H1 (cell line): ENCODE measurements at regions of chr1 and their contacts with region 1.

Region 1: GRCh38 chr1:153990468-153991150 is at the start of gene RPS27:
- DNase-seq: peak; percentile 86 to 93
- H3K4me3 ChIP-seq: peak within 1 kb of the TSS; percentile 78 to 95 (median 87)
- H3K27ac ChIP-seq: peak within 1 kb of the TSS; percentile 95
- H3K4me1 ChIP-seq: peaks cover 0 to 8% (median 3%) of the 10 kb centered on the region in 4 experiments; a peak in 4 of 7 replicates
- H3K27me3 ChIP-seq: no peaks in the 10 kb centered on the region
- CTCF ChIP-seq: no peak
- EP300 ChIP-seq: no peak
- POLR2A ChIP-seq: peak; percentile 100
- RAD21 ChIP-seq: no peak
- total RNA-seq, gene RPS27: 1,810 and 1,941 TPM in 2 replicates

Region 2: DNA sequence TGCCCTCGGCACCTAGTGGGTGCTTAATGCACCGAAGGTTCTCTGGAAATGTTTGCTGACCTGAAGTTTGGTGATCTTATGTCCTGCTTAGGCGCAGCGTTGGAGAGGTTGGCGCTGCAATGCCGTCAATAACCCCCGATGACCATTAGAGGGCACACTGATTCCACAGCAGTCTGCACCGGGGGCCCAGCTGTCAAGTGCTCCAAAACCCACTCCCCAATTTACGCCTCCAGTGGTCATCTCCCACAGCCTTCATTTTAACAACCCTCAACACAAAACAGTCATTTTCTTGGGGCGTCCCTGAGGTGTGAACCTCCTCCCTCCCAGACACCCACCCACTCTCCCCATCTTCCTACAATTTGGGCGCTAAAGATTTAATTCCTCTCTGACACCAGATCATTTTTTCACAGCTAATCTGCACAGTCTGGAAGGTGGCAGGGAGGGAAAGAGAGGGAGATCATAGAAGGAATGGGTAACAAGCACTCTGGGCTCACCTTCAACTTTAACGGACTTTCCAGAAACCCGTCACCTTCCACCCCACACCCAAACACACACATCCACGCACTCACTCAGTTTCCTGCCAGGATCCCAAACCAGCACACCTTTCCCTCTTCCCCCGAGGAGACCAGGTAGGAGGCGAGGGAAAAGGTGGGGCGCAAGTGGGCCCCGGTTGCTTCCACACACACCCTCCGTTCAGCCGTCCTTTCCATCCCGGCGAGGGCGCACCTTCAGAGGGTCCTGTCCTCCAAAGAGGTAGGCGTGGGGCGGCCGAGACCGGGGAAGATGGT is 312.7 kb before region 1 on chr1:
- CTCF ChIA-PET with region 1: no interaction called
- POLR2A ChIA-PET with region 1: interaction called, 17 read pairs
- DNase-seq: peak in 1 of 2 experiments; percentile 82
- H3K4me3 ChIP-seq: peak overlapping the region; percentile 38 to 76 (median 69)
- H3K27ac ChIP-seq: no peak overlapping the region
- H3K4me1 ChIP-seq: peaks cover 3 to 9% (median 6%) of the 10 kb centered on the region in 4 experiments; a peak in 6 of 7 replicates
- H3K27me3 ChIP-seq: peaks cover 0 to 21% (median 9%) of the 10 kb centered on the region in 4 experiments; a peak in 5 of 7 replicates
- CTCF ChIP-seq: peak; percentile 97 to 98 (median 98)
- EP300 ChIP-seq: no peak
- POLR2A ChIP-seq: no peak
- RAD21 ChIP-seq: peak; percentile 94 to 95

Region 3: DNA sequence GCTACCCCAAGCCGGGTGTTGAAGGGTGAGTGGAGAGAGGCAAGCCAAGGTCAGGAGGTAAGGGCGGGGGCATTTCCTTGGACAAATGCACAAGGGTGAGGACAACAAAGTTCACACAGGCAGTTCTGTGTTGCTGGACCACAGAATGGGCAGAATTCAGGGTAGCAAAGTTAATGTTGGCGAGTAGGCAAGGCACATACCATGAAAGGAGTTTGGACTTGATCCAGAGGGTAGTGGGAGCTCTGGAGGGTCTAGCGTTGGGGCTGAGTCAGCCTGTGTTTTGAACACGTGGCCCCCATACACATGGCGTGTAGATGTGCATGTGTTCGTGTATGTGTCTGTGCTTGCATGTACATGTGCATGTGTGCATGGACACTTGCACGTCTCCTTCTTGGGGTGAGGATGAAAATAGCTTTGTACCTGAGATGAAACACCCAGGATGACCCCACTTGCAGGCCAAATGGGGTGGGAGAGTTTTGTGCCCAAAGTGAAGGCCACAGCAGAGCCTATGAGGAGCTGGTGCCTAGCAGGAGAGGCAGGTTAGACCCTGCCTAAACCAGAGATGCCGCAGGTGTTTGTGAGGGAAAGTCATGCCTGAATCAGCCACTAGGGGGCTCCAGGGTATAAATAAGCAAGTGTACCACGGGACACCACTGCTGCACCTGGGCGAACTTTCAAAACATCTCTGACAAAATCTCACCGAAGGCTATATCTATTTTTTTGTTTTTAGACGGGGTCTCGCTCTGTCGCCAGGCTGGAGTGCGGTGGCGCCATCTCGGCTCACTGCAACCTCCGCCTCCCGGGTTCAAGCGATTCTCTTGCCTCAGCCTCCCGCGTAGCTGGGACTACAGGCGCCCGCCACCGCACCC is 193.6 kb before region 1 on chr1:
- CTCF ChIA-PET with region 1: interaction called, 19 read pairs
- POLR2A ChIA-PET with region 1: interaction called, 153 read pairs
- DNase-seq: peak; percentile 59 to 94
- H3K4me3 ChIP-seq: no peak overlapping the region
- H3K27ac ChIP-seq: no peak overlapping the region
- H3K4me1 ChIP-seq: peaks cover 6 to 32% (median 22%) of the 10 kb centered on the region in 4 experiments
- H3K27me3 ChIP-seq: no peaks in the 10 kb centered on the region
- CTCF ChIP-seq: peak in 2 of 3 experiments; percentile 81 to 85; a peak in 3 of 4 replicates
- EP300 ChIP-seq: no peak
- POLR2A ChIP-seq: no peak
- RAD21 ChIP-seq: peak; percentile 70 to 84

Region 4: DNA sequence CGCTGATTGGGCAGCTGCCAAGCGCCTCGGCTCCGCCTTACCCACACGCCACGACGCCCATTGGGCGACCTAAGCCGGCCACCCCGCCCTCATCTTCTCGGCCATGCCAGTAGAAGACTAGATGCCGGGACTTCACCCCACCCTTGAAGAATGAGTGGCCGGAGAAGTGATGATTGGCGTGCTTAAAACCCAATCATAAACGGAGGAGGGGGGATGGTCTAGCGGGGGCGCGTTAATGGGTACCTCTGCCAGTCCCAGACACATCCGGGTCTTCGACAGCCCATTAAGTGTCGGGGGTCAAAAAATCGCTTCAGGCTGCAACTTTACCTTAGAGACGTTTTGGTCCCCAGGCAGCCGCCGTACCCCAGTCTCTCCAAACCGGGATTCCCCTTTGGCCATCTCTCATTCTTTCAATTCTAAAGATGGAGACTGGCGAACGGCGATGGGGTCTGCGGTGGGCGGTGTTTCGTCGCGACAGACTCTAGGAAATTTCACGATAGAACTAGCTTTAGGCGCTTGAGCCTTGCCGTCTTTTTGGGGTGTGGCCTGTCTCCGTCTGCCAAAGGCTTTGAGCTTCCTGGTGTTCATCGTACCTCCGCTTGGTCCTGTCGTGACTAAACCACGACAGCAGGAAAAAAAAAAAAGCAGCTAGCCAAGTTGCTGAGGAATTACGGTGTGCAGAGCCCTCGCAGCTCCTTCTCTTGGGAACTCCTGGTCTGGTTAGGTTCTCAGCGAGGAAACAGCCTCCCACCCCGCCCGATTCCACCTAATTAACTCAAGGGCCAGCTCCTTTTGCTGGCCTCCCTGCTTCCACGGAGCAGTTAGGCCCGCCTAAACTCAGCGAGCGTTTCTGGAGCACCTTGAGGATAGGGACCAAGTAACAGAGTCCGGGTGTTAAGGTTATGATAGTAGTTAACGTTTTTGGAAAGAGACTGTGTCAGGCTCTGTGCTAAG is 67.4 kb before region 1 on chr1 and contains the start of gene GATAD2B:
- CTCF ChIA-PET with region 1: interaction called, 11 read pairs
- POLR2A ChIA-PET with region 1: interaction called, 37 read pairs
- DNase-seq: peak; percentile 96 to 100
- H3K4me3 ChIP-seq: peak within 1 kb of the TSS; percentile 89 to 100 (median 96)
- H3K27ac ChIP-seq: peak within 1 kb of the TSS; percentile 83; the same call in 1 of the 2 replicates
- H3K4me1 ChIP-seq: peaks cover 6 to 14% (median 11%) of the 10 kb centered on the region in 4 experiments
- H3K27me3 ChIP-seq: no peaks in the 10 kb centered on the region
- CTCF ChIP-seq: no peak
- EP300 ChIP-seq: no peak
- POLR2A ChIP-seq: peak in 1 of 2 experiments; percentile 16; a peak in 2 of 3 replicates
- RAD21 ChIP-seq: peak in 1 of 2 experiments; percentile 9; a peak in 1 of 4 replicates
- total RNA-seq, gene GATAD2B: 39.1 and 41.5 TPM in 2 replicates

Region 5: GRCh38 chr1:153967082-153968000 is 23.3 kb before region 1 on chr1 and contains the start of gene CREB3L4:
- CTCF ChIA-PET with region 1: interaction called, 19 read pairs
- POLR2A ChIA-PET with region 1: interaction called, 454 read pairs
- DNase-seq: peak in 1 of 2 experiments; percentile 90
- H3K4me3 ChIP-seq: peak within 1 kb of the TSS; percentile 51 to 77 (median 66)
- H3K27ac ChIP-seq: peak within 1 kb of the TSS; percentile 91
- H3K4me1 ChIP-seq: peaks cover 0 to 12% (median 6%) of the 10 kb centered on the region in 4 experiments; a peak in 5 of 7 replicates
- H3K27me3 ChIP-seq: no peaks in the 10 kb centered on the region
- CTCF ChIP-seq: peak in 2 of 3 experiments; percentile 37 to 51; a peak in 2 of 4 replicates
- EP300 ChIP-seq: no peak
- POLR2A ChIP-seq: peak; percentile 78 to 82
- RAD21 ChIP-seq: peak; percentile 6 to 11; a peak in 1 of 4 replicates
- total RNA-seq, gene CREB3L4: 34.4 and 37.2 TPM in 2 replicates

Region 6: DNA sequence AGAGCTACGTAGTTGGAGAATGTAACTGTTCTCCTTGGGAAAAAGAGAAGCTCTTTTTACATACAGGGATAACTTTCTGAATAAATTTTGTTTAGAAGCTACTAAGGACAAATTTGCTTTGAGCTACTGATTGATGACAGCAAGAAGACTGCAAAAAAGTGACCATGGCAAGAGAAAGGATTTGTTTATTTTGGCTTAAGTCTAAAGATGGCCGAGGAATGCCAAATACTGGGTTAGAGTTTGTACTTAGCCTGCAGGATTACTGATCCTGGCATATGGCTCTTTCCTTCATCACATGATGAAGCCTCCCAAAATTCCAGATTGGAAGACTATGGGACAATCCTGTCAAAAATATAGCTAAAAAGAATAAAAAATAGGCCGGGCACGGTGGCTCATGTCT is 28.7 kb after region 1 on chr1:
- CTCF ChIA-PET with region 1: no interaction called
- POLR2A ChIA-PET with region 1: interaction called, 40 read pairs
- DNase-seq: no peak
- H3K4me3 ChIP-seq: no peak overlapping the region
- H3K27ac ChIP-seq: no peak overlapping the region
- H3K4me1 ChIP-seq: no peaks in the 10 kb centered on the region
- H3K27me3 ChIP-seq: no peaks in the 10 kb centered on the region
- CTCF ChIP-seq: no peak
- EP300 ChIP-seq: no peak
- POLR2A ChIP-seq: no peak
- RAD21 ChIP-seq: no peak

Region 7: GRCh38 chr1:154183045-154183915 is 192.7 kb after region 1 on chr1:
- CTCF ChIA-PET with region 1: no interaction called
- POLR2A ChIA-PET with region 1: interaction called, 34 read pairs
- DNase-seq: peak; percentile 98
- H3K4me3 ChIP-seq: peak overlapping the region; percentile 87 to 97 (median 96)
- H3K27ac ChIP-seq: peak overlapping the region; percentile 80
- H3K4me1 ChIP-seq: peaks cover 15 to 34% (median 24%) of the 10 kb centered on the region in 4 experiments; a peak in 6 of 7 replicates
- H3K27me3 ChIP-seq: no peaks in the 10 kb centered on the region
- CTCF ChIP-seq: peak in 1 of 3 experiments; percentile 7; a peak in 1 of 4 replicates
- EP300 ChIP-seq: peak; percentile 47 to 71
- POLR2A ChIP-seq: peak; percentile 1 to 68
- RAD21 ChIP-seq: peak in 1 of 2 experiments; percentile 10; a peak in 1 of 4 replicates